ENCODE measurements at regions of chr1 and their contacts with region 1.

Region 1: GRCh38 chr1:231866392-231867331 is 240.1 kb downstream of the DISC1 start:
- DNase-seq: peak; percentile 39 to 64
- ATAC-seq: peak in 6 of 8 donors; percentile 28 to 69 (median 45)
- H3K4me3 ChIP-seq: no peak overlapping the region
- H3K27ac ChIP-seq: no peak overlapping the region
- H3K4me1 ChIP-seq: peaks cover 14 to 56% (median 41%) of the 10 kb centered on the region in 9 donors
- H3K27me3 ChIP-seq: no peaks in the 10 kb centered on the region
- CTCF ChIP-seq: peak; percentile 81 to 95 (median 90)

Region 2: GRCh38 chr1:231926340-231926739 is 59.7 kb after region 1 on chr1:
- intact Hi-C with region 1: loop called in 3 of 10 experiments (anchors 2 to 5 kb)
- DNase-seq: no peak
- ATAC-seq: peak in 6 of 8 donors; percentile 20 to 90 (median 72)
- H3K4me3 ChIP-seq: no peak overlapping the region
- H3K27ac ChIP-seq: peak overlapping the region; percentile 16 to 73 (median 50)
- H3K4me1 ChIP-seq: peaks cover 12 to 71% (median 49%) of the 10 kb centered on the region in 9 donors
- H3K27me3 ChIP-seq: no peaks in the 10 kb centered on the region
- CTCF ChIP-seq: no peak

Region 3: DNA sequence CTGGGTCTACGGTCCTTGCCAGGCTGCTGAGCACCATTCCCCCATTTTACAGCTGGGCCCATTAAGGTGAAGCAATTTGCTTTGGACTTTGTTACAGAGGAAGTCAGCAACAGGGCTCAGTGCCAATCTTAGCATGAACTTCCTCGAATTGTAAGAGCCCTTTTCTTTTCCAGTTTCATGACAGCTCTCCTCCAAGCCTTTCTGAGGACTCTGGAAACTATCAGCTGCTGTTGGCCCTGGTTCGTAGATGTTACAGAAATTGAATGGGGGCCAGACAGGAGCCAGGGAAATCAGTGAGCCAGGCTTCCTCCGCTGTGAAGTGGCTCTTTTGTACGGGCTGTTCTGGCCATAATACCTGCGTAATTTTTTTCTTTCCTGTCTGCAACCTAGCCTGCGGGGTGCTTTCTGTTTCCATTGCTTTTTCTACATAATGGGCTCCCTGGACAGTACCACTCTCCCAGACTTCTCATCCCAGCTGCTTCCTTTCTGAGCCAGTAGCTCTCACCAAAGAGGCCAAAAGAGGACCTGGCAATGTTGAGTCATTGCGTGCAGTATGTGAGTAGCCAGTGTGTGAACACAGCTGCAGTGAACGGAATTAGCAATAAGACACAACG is 146.2 kb after region 1 on chr1:
- intact Hi-C with region 1: loop called in 2 of 10 experiments (anchors 5 to 10 kb)
- DNase-seq: peak; percentile 23 to 85
- ATAC-seq: peak; percentile 87 to 96 (median 94)
- H3K4me3 ChIP-seq: peak overlapping the region in 6 of 10 donors; percentile 17 to 37 (median 22)
- H3K27ac ChIP-seq: peak overlapping the region; percentile 1 to 81 (median 64)
- H3K4me1 ChIP-seq: peaks cover 4 to 41% (median 33%) of the 10 kb centered on the region in 9 donors
- H3K27me3 ChIP-seq: no peaks in the 10 kb centered on the region
- CTCF ChIP-seq: no peak

Region 4: GRCh38 chr1:232319072-232319471 is 452.4 kb after region 1 on chr1:
- intact Hi-C with region 1: loop called in 2 of 10 experiments (anchors 5 to 10 kb)
- DNase-seq: peak; percentile 83 to 85
- ATAC-seq: peak; percentile 90 to 97 (median 95)
- H3K4me3 ChIP-seq: no peak overlapping the region
- H3K27ac ChIP-seq: peak overlapping the region; percentile 25 to 89 (median 78)
- H3K4me1 ChIP-seq: peaks cover 0 to 30% (median 3%) of the 10 kb centered on the region in 9 donors
- H3K27me3 ChIP-seq: no peaks in the 10 kb centered on the region
- CTCF ChIP-seq: no peak

Region 5: GRCh38 chr1:232428786-232429530 is 562.3 kb after region 1 on chr1:
- intact Hi-C with region 1: loop called in 1 of 10 experiments (anchors 10 kb)
- DNase-seq: no peak
- ATAC-seq: peak in 5 of 8 donors; percentile 36 to 63 (median 42)
- H3K4me3 ChIP-seq: no peak overlapping the region
- H3K27ac ChIP-seq: peak overlapping the region in 6 of 10 donors; percentile 47 to 68 (median 57)
- H3K4me1 ChIP-seq: peaks cover 0 to 65% (median 31%) of the 10 kb centered on the region in 9 donors
- H3K27me3 ChIP-seq: no peaks in the 10 kb centered on the region
- CTCF ChIP-seq: peak in 1 of 9 donors; percentile 7

Region 6: GRCh38 chr1:233240829-233241682 is 1374.4 kb after region 1 on chr1:
- intact Hi-C with region 1: loop called in 1 of 10 experiments (anchors 5 kb)
- DNase-seq: peak; percentile 54 to 56
- ATAC-seq: peak; percentile 84 to 92 (median 88)
- H3K4me3 ChIP-seq: peak overlapping the region in 3 of 10 donors; percentile 2 to 21 (median 6)
- H3K27ac ChIP-seq: no peak overlapping the region
- H3K4me1 ChIP-seq: peaks cover 0 to 39% (median 9%) of the 10 kb centered on the region in 9 donors
- H3K27me3 ChIP-seq: no peaks in the 10 kb centered on the region
- CTCF ChIP-seq: peak; percentile 61 to 93 (median 84)

Measured in heart right ventricle (tissue), 16 donors.